GM13976 (cell line): ENCODE measurements at regions of chr12 and their contacts with region 1.

Region 1: GRCh38 chr12:44015335-44015941 is 179.6 kb downstream of the TMEM117 start:
- DNase-seq: peak; percentile 29
- CTCF ChIP-seq: peak; percentile 39

Region 2: DNA sequence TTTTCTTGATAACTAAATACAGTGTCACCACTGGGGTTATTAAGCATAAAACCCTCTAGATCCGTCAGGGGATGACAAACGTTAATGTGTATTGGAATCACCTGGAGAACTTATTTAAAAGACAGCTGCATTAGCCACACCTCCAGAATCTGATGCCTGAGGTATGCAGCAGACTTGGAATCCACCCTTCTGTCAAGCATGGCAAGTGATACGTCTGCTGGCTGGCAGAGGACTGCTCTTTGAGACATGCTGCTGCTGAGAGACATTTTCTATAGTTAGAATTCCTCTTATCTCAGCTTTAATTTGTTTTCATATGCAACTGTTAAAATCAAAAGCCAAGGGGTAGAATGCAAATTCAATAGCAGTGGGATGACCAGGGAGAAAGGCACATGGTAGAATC is 364.4 kb after region 1 on chr12:
- in situ Hi-C with region 1: no loop called
- DNase-seq: no peak
- CTCF ChIP-seq: no peak

Region 3: DNA sequence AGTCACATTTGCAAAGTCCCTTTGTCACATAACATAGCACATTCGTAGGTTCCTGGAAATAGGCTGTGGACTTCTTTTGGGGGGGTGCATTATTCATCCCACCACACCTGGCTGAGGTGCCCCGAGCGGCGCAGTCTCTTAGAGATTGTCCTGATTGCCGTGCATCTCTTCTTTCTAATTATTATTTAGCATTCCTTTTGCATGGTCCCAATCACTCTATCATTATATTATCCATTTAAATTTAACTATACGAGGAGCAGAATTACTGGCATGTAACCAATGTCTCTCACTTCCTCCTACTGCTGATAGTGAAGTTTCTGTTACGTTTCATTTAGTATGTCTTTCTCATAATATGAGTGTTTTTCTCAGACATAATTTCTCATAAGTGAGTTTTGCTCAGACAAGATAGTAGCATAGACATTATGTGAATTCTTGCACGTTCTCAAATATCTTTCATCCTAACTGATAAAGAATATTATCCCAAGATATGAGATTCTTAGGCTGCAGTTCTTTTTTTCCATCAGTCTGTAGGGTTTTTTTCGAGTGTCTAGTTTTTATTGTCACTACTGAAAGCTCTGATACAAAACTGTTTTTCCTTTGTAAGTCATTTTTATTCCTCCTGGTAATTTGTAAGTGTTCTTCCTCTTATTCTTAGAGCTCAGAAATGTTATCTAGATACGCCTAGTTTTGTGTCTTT is 416.4 kb after region 1 on chr12:
- in situ Hi-C with region 1: loop called (anchors 25 kb)
- DNase-seq: peak; percentile 9
- CTCF ChIP-seq: no peak

Region 4: GRCh38 chr12:44459569-44459968 is 444.1 kb after region 1 on chr12:
- in situ Hi-C with region 1: no loop called
- DNase-seq: no peak
- CTCF ChIP-seq: no peak

Region 5: GRCh38 chr12:44930972-44931600 is 915.6 kb after region 1 on chr12:
- in situ Hi-C with region 1: loop called (anchors 25 kb)
- DNase-seq: peak; percentile 50
- CTCF ChIP-seq: peak; percentile 32